Activated CD4-positive, alpha-beta T cell treated with anti-CD3 and anti-CD28 coated beads, Interleukin-2, amount 10 ng/mL, durations not matched to agents 24 days and 14 days (primary cell): ENCODE measurements at regions of chr11 and their contacts with region 1.

Region 1: DNA sequence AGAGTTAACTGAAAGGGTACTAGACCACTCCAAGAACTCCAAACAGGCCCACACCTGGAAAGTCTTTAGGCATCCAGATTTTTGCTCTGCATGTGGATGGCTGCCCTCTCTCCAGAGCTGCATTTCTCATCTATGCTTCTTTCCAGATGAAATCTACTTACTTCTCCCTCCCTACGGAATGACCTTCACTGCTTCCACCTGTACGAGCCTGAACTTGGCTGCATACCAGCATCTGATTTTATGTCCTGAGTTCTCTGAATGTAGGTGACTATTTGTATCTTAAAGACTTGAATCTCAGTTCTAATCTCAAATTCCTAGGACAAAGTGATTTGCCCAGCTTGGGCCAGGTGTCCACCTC is 13.3 kb downstream of the CELF1 start:
- DNase-seq: no peak
- H3K4me3 Mint-ChIP-seq: no peak overlapping the region
- H3K27ac Mint-ChIP-seq: peak overlapping the region; percentile 81
- H3K4me1 Mint-ChIP-seq: peaks cover 36% of the 10 kb centered on the region
- H3K27me3 Mint-ChIP-seq: no peaks in the 10 kb centered on the region

Region 2: GRCh38 chr11:47514825-47515647 is 24.6 kb before region 1 on chr11:
- intact Hi-C with region 1: loop called (anchors 2 kb)
- DNase-seq: peak; percentile 66
- H3K4me3 Mint-ChIP-seq: peak overlapping the region; percentile 60
- H3K27ac Mint-ChIP-seq: peak overlapping the region; percentile 91
- H3K4me1 Mint-ChIP-seq: peaks cover 54% of the 10 kb centered on the region
- H3K27me3 Mint-ChIP-seq: no peaks in the 10 kb centered on the region